ENCODE measurements at regions of chr1 and their contacts with region 1.

Region 1: GRCh38 chr1:168408536-168409242 is 128.0 kb downstream of the TBX19 start:
- DNase-seq: peak; percentile 82
- H3K4me3 Mint-ChIP-seq: no peak overlapping the region
- H3K27ac Mint-ChIP-seq: peak overlapping the region; percentile 32
- H3K4me1 Mint-ChIP-seq: peaks cover 34% of the 10 kb centered on the region
- H3K27me3 Mint-ChIP-seq: no peaks in the 10 kb centered on the region

Region 2: DNA sequence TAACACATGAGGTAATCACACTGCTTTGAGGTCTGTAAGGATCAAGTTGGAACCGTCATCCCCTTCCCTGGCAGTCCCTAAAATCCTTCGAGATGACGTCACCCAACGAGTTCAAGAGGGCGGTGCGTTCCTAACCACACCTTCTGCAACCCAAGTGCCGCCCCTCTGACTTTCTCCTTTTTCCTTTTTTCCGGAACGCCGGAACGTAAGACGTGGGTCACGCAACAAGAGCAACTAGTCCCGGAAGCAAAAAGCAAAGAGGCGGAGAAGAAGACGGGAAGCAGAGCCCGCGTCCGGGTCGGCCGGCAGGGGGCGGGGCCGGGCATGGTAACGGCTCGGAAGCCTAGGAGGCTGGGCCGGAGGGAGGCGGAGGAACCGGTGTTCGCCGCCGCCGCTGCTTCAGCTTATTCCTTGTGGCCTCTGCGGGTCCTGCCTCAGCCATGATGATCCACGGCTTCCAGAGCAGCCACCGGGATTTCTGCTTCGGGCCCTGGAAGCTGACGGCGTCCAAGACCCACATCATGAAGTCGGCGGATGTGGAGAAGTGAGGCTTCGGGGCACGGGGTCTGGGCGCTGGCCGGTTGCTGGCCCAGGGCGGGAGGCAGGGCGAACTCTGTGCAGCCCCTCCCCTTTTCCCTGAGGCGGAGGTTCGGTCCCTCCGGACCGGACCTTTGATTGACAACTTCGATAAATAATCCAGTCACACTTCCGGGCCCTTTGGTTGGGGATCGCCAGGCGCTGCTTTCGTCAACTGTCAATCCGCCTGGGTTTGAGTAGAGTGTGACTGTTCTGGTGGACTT is 229.9 kb before region 1 on chr1 and contains the start of gene TIPRL:
- CTCF ChIA-PET with region 1: no interaction called
- intact Hi-C with region 1: loop called (anchors 2 kb)
- DNase-seq: peak; percentile 97
- H3K4me3 Mint-ChIP-seq: no peak within 1 kb of the TSS
- H3K27ac Mint-ChIP-seq: no peak within 1 kb of the TSS
- H3K4me1 Mint-ChIP-seq: peaks cover 7% of the 10 kb centered on the region
- H3K27me3 Mint-ChIP-seq: peaks cover 2% of the 10 kb centered on the region
- total RNA-seq, gene TIPRL: 76.7 to 81.3 TPM

Region 3: DNA sequence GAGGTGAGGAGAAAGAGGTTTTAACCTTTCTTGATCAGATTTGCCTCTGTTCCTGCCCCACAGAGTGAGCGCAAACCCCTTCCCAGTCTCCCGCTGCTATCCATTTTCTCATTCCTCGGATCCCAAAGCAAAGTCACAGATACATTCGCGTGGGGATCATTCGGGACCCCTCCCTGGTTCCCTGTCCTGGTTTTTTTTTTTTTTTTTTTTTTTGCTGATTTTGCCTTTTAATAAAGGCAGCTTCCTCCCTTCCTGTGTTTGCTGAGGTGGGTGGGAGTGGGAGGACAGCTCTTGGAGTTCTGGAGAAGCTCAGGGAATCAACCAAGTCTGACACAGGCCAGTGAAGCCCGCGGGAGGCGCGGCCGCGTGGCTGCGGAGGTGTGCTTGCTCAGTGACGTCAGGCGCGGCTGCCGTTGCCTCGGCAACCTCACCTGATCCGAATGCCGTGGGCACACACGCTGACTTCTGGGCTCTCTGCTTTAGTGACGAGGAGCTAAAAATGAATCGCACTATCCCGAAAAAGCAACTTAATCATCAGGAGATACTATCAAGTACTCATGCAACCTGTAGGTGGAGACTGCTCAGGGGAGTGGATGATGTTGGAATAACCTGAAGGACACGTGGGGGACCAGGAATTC is 21.6 kb before region 1 on chr1:
- CTCF ChIA-PET with region 1: interaction called, 3 read pairs
- intact Hi-C with region 1: loop called (anchors 1 kb)
- DNase-seq: peak; percentile 78
- H3K4me3 Mint-ChIP-seq: peak overlapping the region; percentile 38
- H3K27ac Mint-ChIP-seq: no peak overlapping the region
- H3K4me1 Mint-ChIP-seq: peaks cover 12% of the 10 kb centered on the region
- H3K27me3 Mint-ChIP-seq: peaks cover 9% of the 10 kb centered on the region

Region 4: DNA sequence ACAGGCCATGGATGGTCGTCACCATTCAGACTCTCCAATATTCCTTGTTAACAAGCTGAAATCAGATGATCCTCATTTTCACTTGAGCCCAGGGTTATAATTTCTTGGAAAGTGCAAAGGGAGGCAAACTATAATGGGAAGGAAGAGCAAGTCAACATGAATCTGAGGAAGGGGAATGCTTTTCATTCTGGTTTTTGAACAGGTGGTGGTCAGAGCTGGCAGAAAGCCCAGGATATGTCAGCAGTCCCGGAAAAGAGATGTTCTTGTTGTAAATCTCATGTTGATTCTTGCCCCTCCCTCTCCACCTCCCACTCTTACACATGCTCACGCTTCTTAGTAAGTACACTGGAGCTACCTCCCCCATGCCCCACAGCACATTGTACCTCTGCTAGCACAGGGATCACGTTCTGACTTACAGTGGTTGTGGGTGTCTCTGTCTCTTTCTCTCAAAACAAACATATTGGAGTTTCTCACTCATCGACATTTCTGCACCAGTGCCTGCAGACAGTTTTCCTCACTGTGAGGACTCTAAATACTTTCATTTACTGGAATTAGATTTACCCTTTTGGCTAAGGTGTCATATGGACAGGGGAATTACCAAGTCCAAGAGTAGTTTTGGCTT is 57.5 kb after region 1 on chr1:
- CTCF ChIA-PET with region 1: no interaction called
- intact Hi-C with region 1: loop called (anchors 2 kb)
- DNase-seq: peak; percentile 72
- H3K4me3 Mint-ChIP-seq: no peak overlapping the region
- H3K27ac Mint-ChIP-seq: peak overlapping the region; percentile 32
- H3K4me1 Mint-ChIP-seq: peaks cover 51% of the 10 kb centered on the region
- H3K27me3 Mint-ChIP-seq: no peaks in the 10 kb centered on the region

Region 5: GRCh38 chr1:169794530-169795416 is 1386.1 kb after region 1 on chr1 and contains the start of gene METTL18:
- CTCF ChIA-PET with region 1: no interaction called
- intact Hi-C with region 1: loop called (anchors 10 kb)
- DNase-seq: peak; percentile 97
- H3K4me3 Mint-ChIP-seq: peak within 1 kb of the TSS; percentile 99
- H3K27ac Mint-ChIP-seq: peak within 1 kb of the TSS; percentile 99
- H3K4me1 Mint-ChIP-seq: peaks cover 48% of the 10 kb centered on the region
- H3K27me3 Mint-ChIP-seq: no peaks in the 10 kb centered on the region
- total RNA-seq, gene METTL18: 10.6 to 11.1 TPM